Activated T-helper 1 cell treated with anti-CD3 and anti-CD28 coated beads, Interleukin-12 subunit alpha, Interleukin-12 subunit beta, Interleukin-2, Interleukin-4 antibody, amounts not matched to agents 30 ng/mL and 10 ng/mL and 1 ng/mL, durations not matched to agents 14 hours and 24 hours and 36 hours (primary cell): ENCODE measurements at regions of chr16 and their contacts with region 1.

Region 1: DNA sequence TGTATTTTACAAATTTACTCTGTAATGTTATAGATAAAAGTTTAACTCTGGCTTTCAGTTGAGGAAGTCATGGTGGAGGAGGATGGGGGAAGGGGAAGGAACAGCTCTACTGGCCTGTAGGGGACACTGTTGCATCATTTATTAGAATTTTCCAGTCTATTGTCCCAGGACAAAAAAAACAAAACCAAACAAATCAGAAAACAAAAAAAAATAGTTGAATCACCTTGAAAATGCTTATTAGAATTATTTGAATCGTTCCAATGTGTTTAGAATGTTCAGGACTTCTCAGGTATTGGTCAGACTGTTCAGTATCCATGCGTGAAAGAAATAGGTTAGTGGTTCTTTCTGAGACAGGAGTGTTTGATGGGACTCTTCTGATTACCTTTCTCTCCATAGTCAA is 242.0 kb downstream of the FTO start:
- DNase-seq: no peak
- H3K4me3 Mint-ChIP-seq: no peak overlapping the region
- H3K27ac Mint-ChIP-seq: no peak overlapping the region
- H3K4me1 Mint-ChIP-seq: peaks cover 43% of the 10 kb centered on the region
- H3K27me3 Mint-ChIP-seq: no peaks in the 10 kb centered on the region

Region 2: GRCh38 chr16:51951668-51952298 is 1994.2 kb before region 1 on chr16:
- intact Hi-C with region 1: no loop called
- DNase-seq: no peak
- H3K4me3 Mint-ChIP-seq: no peak overlapping the region
- H3K27ac Mint-ChIP-seq: no peak overlapping the region
- H3K4me1 Mint-ChIP-seq: no peaks in the 10 kb centered on the region
- H3K27me3 Mint-ChIP-seq: no peaks in the 10 kb centered on the region

Region 3: GRCh38 chr16:53872248-53873221 is 73.5 kb before region 1 on chr16:
- intact Hi-C with region 1: no loop called
- DNase-seq: no peak
- H3K4me3 Mint-ChIP-seq: no peak overlapping the region
- H3K27ac Mint-ChIP-seq: peak overlapping the region; percentile 67
- H3K4me1 Mint-ChIP-seq: peaks cover 11% of the 10 kb centered on the region
- H3K27me3 Mint-ChIP-seq: no peaks in the 10 kb centered on the region

Region 4: DNA sequence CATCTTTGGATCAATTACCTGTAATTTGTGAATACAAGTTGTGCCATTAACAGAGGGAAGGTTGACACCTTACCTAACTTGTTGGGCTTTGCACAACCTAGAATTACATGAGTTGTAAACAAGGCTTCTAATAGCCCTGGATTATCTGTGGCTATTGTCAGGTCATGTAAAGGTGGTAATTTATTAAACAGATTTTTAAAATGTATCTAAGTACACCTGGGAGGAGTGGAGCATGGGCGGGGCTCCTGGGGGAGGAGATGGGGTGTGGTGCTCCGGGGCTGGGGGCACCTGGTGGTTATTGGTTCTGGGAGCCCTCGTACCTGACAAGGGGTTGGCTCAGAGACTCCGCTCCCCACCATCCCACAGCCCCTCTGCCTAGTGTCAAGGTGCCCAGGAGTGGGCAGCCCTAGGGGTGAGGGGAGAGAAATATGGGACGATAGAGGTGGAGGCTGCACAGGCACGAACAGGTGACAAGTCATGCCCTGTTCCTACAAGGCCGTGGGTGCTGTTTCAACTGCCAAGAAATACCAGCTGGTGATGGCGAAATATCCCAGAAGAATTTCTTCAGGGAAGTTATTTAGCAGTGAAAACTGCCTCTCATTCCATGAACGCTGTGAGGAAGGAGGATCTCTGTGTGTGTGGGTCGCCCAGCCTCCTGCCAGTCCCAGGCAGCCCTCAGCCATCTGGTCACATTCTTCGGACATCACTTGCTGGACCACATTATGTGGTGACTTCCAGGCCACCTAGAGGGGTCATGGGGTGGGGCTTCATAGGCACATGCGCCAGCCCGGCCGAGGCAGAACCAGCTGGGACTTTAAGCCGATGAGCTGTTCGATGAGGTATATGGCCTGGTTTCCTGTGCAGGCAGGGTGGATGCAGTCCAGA is 396.1 kb after region 1 on chr16:
- intact Hi-C with region 1: no loop called
- DNase-seq: no peak
- H3K4me3 Mint-ChIP-seq: no peak overlapping the region
- H3K27ac Mint-ChIP-seq: no peak overlapping the region
- H3K4me1 Mint-ChIP-seq: no peaks in the 10 kb centered on the region
- H3K27me3 Mint-ChIP-seq: no peaks in the 10 kb centered on the region

Region 5: GRCh38 chr16:54929090-54930004 is 983.4 kb after region 1 on chr16:
- intact Hi-C with region 1: loop called (anchors 5 kb)
- DNase-seq: peak; percentile 89
- H3K4me3 Mint-ChIP-seq: peak overlapping the region; percentile 88
- H3K27ac Mint-ChIP-seq: peak overlapping the region; percentile 88
- H3K4me1 Mint-ChIP-seq: peaks cover 21% of the 10 kb centered on the region
- H3K27me3 Mint-ChIP-seq: peaks cover 68% of the 10 kb centered on the region

Region 6: GRCh38 chr16:55257966-55258613 is 1312.1 kb after region 1 on chr16:
- intact Hi-C with region 1: loop called (anchors 5 kb)
- DNase-seq: peak; percentile 9
- H3K4me3 Mint-ChIP-seq: no peak overlapping the region
- H3K27ac Mint-ChIP-seq: no peak overlapping the region
- H3K4me1 Mint-ChIP-seq: no peaks in the 10 kb centered on the region
- H3K27me3 Mint-ChIP-seq: no peaks in the 10 kb centered on the region